ENCODE measurements at regions of chr20 and their contacts with region 1.

Region 1: GRCh38 chr20:40962730-40963504 is 65.7 kb upstream of the TOP1 start:
- DNase-seq: peak; percentile 85
- ATAC-seq: peak; percentile 88
- H3K4me3 Mint-ChIP-seq: no peak overlapping the region
- H3K27ac Mint-ChIP-seq: no peak overlapping the region
- H3K4me1 Mint-ChIP-seq: peaks cover 8% of the 10 kb centered on the region
- H3K27me3 Mint-ChIP-seq: no peaks in the 10 kb centered on the region

Region 2: DNA sequence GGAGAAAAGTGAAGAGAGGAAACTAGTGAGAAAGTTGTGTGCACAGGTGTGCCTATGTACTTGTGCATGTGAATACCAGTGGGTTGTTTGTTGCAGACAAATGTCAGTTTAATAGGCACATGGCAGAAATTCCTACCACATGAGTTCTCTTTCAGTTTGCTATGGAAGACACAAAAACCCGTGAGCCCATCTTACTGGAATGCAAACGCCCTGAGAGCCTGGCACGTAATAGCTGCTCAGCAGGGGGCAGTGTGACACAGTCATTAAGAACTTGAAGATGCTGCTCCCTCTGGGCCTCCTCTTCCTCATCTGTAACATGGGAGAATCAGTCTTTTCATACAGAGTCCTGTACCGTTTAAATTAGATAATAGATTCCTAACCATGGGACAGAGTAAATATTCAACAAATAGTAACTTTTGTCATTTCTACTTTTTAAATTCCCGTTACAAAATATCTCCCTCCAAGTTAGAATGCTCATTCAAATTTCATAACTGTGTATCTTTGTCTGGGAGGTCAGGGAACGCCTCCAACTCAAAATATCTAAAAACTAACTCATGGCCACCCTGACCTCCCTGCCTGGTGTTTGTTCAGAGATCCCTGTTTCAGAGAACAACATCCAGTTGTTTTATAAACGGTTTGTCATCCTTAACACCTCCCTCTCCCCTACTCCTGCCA is 1076.8 kb before region 1 on chr20:
- CTCF ChIA-PET with region 1: no interaction called
- POLR2A ChIA-PET with region 1: no interaction called
- intact Hi-C with region 1: loop called in 1 of 2 experiments (anchors 5 kb)
- DNase-seq: peak; percentile 48
- ATAC-seq: no peak
- H3K4me3 Mint-ChIP-seq: no peak overlapping the region
- H3K27ac Mint-ChIP-seq: no peak overlapping the region
- H3K4me1 Mint-ChIP-seq: no peaks in the 10 kb centered on the region
- H3K27me3 Mint-ChIP-seq: peaks cover 8% of the 10 kb centered on the region

Region 3: GRCh38 chr20:40741507-40742106 is 221.3 kb before region 1 on chr20:
- CTCF ChIA-PET with region 1: interaction called, 94 read pairs
- POLR2A ChIA-PET with region 1: no interaction called
- intact Hi-C with region 1: loop called (anchors 1 kb)
- DNase-seq: peak; percentile 67
- ATAC-seq: no peak
- H3K4me3 Mint-ChIP-seq: no peak overlapping the region
- H3K27ac Mint-ChIP-seq: no peak overlapping the region
- H3K4me1 Mint-ChIP-seq: no peaks in the 10 kb centered on the region
- H3K27me3 Mint-ChIP-seq: peaks cover 3% of the 10 kb centered on the region

Region 4: GRCh38 chr20:40797425-40797824 is 165.5 kb before region 1 on chr20:
- CTCF ChIA-PET with region 1: interaction called, 15 read pairs
- POLR2A ChIA-PET with region 1: no interaction called
- intact Hi-C with region 1: loop called in 1 of 2 experiments (anchors 2 kb)
- DNase-seq: no peak
- ATAC-seq: no peak
- H3K4me3 Mint-ChIP-seq: no peak overlapping the region
- H3K27ac Mint-ChIP-seq: no peak overlapping the region
- H3K4me1 Mint-ChIP-seq: no peaks in the 10 kb centered on the region
- H3K27me3 Mint-ChIP-seq: peaks cover 8% of the 10 kb centered on the region

Region 5: DNA sequence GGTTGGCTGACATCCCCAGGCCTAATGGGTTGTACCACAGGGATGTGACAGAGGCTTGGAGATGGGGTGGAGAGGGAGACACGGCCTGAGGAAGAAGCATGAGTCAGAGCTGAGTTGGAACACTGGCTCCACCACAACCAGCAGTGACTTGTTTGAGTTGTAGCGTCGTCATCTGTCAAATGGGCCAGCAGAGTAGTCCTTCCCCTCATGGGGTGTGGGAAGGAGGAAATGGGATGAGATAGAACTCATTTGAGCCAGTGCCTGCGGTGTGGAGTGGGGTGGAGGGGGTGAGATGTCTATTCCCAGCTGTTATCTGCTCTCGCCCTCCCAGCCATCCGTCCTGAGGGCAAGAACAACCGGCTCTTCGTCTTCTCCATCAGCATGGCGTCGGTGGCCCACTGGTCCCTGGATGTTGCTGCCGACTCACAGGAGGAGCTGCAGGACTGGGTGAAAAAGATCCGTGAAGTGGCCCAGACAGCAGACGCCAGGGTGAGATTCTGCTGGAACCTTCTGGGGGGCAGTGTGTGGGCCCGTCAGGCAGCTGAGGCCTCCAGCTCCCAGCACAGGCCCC is 206.9 kb after region 1 on chr20:
- CTCF ChIA-PET with region 1: no interaction called
- POLR2A ChIA-PET with region 1: no interaction called
- intact Hi-C with region 1: no loop called
- DNase-seq: peak; percentile 4
- ATAC-seq: no peak
- H3K4me3 Mint-ChIP-seq: no peak overlapping the region
- H3K27ac Mint-ChIP-seq: peak overlapping the region; percentile 45
- H3K4me1 Mint-ChIP-seq: peaks cover 18% of the 10 kb centered on the region
- H3K27me3 Mint-ChIP-seq: no peaks in the 10 kb centered on the region

Region 6: DNA sequence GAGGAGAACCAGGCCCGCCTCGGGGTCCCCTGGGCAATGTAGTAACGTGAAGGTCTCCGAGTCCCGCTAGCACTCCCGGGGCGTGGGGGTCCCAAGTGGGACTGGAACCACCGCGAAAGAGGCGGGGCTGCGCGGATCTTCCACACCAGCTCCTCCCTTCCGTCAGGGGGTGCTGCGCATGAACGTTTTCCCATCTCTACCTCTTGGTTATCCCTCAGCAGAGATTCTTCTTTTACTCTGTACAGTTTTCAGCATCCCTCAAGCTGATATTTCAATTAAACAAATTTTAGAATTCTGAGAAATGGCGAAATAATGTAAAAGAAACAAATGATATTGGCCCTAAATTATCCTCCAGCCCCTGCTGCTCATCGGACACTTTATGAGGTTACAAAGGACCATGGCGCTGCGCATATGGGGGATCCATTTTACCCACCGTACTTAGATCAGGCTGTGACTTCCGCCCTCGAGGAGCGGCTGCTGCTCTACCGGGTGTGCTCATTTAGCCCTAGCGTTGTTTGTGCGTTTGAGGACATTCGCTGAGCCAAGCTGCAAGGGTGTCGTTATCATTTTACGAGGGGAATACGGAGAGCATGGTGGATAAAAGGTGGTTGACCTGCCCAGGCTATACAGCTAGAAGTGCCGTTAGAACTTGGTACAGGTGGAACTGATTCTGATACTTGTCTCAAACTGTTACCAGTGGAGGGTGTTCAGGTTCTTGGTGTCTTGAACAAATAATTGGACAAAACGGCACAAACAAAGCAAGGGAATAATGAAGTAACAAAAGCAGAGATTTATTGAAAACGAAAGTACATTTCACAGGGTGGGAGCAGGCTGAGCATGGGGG is 730.4 kb after region 1 on chr20:
- CTCF ChIA-PET with region 1: interaction called, 3 read pairs
- POLR2A ChIA-PET with region 1: no interaction called
- intact Hi-C with region 1: loop called in 1 of 2 experiments (anchors 10 kb)
- DNase-seq: peak; percentile 88
- ATAC-seq: peak; percentile 90
- H3K4me3 Mint-ChIP-seq: peak overlapping the region; percentile 90
- H3K27ac Mint-ChIP-seq: peak overlapping the region; percentile 94
- H3K4me1 Mint-ChIP-seq: peaks cover 13% of the 10 kb centered on the region
- H3K27me3 Mint-ChIP-seq: peaks cover 2% of the 10 kb centered on the region